Mammary epithelial cell (primary cell): ENCODE measurements at regions of chr9 and their contacts with region 1.

Region 1: GRCh38 chr9:109244157-109245132 is 76.4 kb downstream of the EPB41L4B start:
- DNase-seq: peak; percentile 40
- H3K4me3 ChIP-seq: no peak overlapping the region
- H3K27ac ChIP-seq: no peak overlapping the region
- H3K4me1 ChIP-seq: no peaks in the 10 kb centered on the region
- H3K27me3 ChIP-seq: no peaks in the 10 kb centered on the region
- CTCF ChIP-seq: peak; percentile 93 to 98

Region 2: GRCh38 chr9:109150925-109151545 is 93.4 kb before region 1 on chr9:
- CTCF ChIA-PET with region 1: no interaction called
- dilution Hi-C with region 1: loop called (anchors 5 kb)
- in situ Hi-C with region 1: no loop called
- intact Hi-C with region 1: no loop called
- DNase-seq: no peak
- H3K4me3 ChIP-seq: no peak overlapping the region
- H3K27ac ChIP-seq: no peak overlapping the region
- H3K4me1 ChIP-seq: no peaks in the 10 kb centered on the region
- H3K27me3 ChIP-seq: peaks cover 2% of the 10 kb centered on the region
- CTCF ChIP-seq: no peak

Region 3: GRCh38 chr9:109274884-109275730 is 30.7 kb after region 1 on chr9:
- CTCF ChIA-PET with region 1: no interaction called
- dilution Hi-C with region 1: loop called (anchors 5 kb)
- in situ Hi-C with region 1: no loop called
- intact Hi-C with region 1: no loop called
- DNase-seq: no peak
- H3K4me3 ChIP-seq: no peak overlapping the region
- H3K27ac ChIP-seq: no peak overlapping the region
- H3K4me1 ChIP-seq: peaks cover 5% of the 10 kb centered on the region
- H3K27me3 ChIP-seq: no peaks in the 10 kb centered on the region
- CTCF ChIP-seq: no peak

Region 4: GRCh38 chr9:109401168-109401989 is 156.9 kb after region 1 on chr9:
- CTCF ChIA-PET with region 1: no interaction called
- dilution Hi-C with region 1: no loop called
- in situ Hi-C with region 1: no loop called
- intact Hi-C with region 1: loop called (anchors 1 kb)
- DNase-seq: peak; percentile 53
- H3K4me3 ChIP-seq: no peak overlapping the region
- H3K27ac ChIP-seq: no peak overlapping the region
- H3K4me1 ChIP-seq: no peaks in the 10 kb centered on the region
- H3K27me3 ChIP-seq: no peaks in the 10 kb centered on the region
- CTCF ChIP-seq: peak; percentile 88 to 94